PC-3 (cell line): ENCODE measurements at regions of chr7 and their contacts with region 1.

Region 1: GRCh38 chr7:123154231-123154860 is 45.4 kb downstream of the SLC13A1 start:
- DNase-seq: peak; percentile 86
- ATAC-seq: peak; percentile 78
- H3K4me3 ChIP-seq: no peak overlapping the region
- H3K27ac ChIP-seq: no peak overlapping the region
- H3K4me1 ChIP-seq: no peaks in the 10 kb centered on the region
- H3K27me3 ChIP-seq: no peaks in the 10 kb centered on the region
- CTCF ChIP-seq: peak; percentile 81

Region 2: DNA sequence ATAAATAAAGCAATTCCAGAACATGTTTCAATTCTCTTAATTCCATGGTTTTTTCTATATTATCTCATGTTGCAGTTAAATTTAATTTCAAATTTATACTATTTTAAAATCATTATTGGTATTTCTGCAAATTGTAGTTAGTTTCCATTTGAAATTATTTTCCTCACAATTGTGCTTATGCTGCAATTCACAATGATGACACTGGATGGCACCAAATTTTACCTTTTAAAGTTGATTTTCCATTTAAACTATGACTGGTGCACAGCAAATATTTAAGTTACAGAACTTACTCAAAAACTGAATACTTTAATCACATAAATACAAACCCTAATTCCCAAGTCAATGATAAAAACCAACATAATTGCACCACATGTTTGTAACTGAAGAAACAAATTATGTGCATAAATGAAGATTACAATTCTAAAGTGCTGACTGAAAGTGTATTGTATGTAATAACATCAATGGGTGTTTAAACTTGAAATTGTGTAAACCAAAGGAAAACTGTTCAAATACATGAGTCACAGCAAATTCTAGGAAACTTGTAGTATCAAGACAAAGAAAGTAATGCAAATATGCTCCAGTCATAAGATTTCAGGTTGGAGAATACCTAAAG is 935.0 kb before region 1 on chr7:
- CTCF ChIA-PET with region 1: no interaction called
- POLR2A ChIA-PET with region 1: no interaction called
- intact Hi-C with region 1: loop called (anchors 10 kb)
- DNase-seq: peak; percentile 63
- ATAC-seq: peak; percentile 46
- H3K4me3 ChIP-seq: no peak overlapping the region
- H3K27ac ChIP-seq: no peak overlapping the region
- H3K4me1 ChIP-seq: peaks cover 11% of the 10 kb centered on the region; the same call in 1 of the 2 replicates
- H3K27me3 ChIP-seq: no peaks in the 10 kb centered on the region
- CTCF ChIP-seq: peak; percentile 70

Region 3: DNA sequence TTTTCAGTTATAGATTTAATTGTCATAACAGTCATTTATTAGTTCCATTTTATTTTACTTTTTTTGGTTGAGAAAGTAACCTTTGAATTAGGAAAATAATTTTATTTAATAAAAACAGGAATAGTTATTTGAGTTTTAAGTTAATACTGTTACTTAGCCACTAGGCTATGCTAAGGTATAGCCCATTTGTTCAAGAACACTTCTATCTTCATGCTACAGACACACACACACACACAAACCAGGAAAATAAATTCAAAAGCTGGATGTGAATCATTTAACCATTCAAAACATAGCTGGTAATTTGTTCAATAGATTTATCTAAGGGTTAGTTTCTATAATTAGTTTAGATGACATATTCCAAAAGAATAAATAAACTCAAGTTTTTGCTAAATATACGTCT is 603.8 kb before region 1 on chr7:
- CTCF ChIA-PET with region 1: no interaction called
- POLR2A ChIA-PET with region 1: no interaction called
- intact Hi-C with region 1: loop called (anchors 5 kb)
- DNase-seq: peak; percentile 4
- ATAC-seq: no peak
- H3K4me3 ChIP-seq: no peak overlapping the region
- H3K27ac ChIP-seq: no peak overlapping the region
- H3K4me1 ChIP-seq: no peaks in the 10 kb centered on the region
- H3K27me3 ChIP-seq: no peaks in the 10 kb centered on the region
- CTCF ChIP-seq: peak; percentile 32; the same call in 1 of the 2 replicates

Region 4: GRCh38 chr7:122803323-122803722 is 351.0 kb before region 1 on chr7:
- CTCF ChIA-PET with region 1: interaction called, 5 read pairs
- POLR2A ChIA-PET with region 1: no interaction called
- intact Hi-C with region 1: loop called (anchors 1 kb)
- DNase-seq: peak; percentile 52
- ATAC-seq: peak; percentile 71
- H3K4me3 ChIP-seq: no peak overlapping the region
- H3K27ac ChIP-seq: no peak overlapping the region
- H3K4me1 ChIP-seq: no peaks in the 10 kb centered on the region
- H3K27me3 ChIP-seq: no peaks in the 10 kb centered on the region
- CTCF ChIP-seq: peak; percentile 61

Region 5: GRCh38 chr7:122896509-122896908 is 257.8 kb before region 1 on chr7:
- CTCF ChIA-PET with region 1: no interaction called
- POLR2A ChIA-PET with region 1: no interaction called
- intact Hi-C with region 1: loop called (anchors 2 kb)
- DNase-seq: peak; percentile 26
- ATAC-seq: no peak
- H3K4me3 ChIP-seq: no peak overlapping the region
- H3K27ac ChIP-seq: no peak overlapping the region
- H3K4me1 ChIP-seq: peaks cover 9% of the 10 kb centered on the region
- H3K27me3 ChIP-seq: no peaks in the 10 kb centered on the region
- CTCF ChIP-seq: peak; percentile 48

Region 6: GRCh38 chr7:123070702-123071286 is 83.6 kb before region 1 on chr7:
- CTCF ChIA-PET with region 1: no interaction called
- POLR2A ChIA-PET with region 1: no interaction called
- intact Hi-C with region 1: loop called (anchors 2 kb)
- DNase-seq: peak; percentile 49
- ATAC-seq: peak; percentile 43
- H3K4me3 ChIP-seq: no peak overlapping the region
- H3K27ac ChIP-seq: no peak overlapping the region
- H3K4me1 ChIP-seq: no peaks in the 10 kb centered on the region
- H3K27me3 ChIP-seq: peaks cover 14% of the 10 kb centered on the region; the same call in 1 of the 2 replicates
- CTCF ChIP-seq: peak; percentile 72

Region 7: DNA sequence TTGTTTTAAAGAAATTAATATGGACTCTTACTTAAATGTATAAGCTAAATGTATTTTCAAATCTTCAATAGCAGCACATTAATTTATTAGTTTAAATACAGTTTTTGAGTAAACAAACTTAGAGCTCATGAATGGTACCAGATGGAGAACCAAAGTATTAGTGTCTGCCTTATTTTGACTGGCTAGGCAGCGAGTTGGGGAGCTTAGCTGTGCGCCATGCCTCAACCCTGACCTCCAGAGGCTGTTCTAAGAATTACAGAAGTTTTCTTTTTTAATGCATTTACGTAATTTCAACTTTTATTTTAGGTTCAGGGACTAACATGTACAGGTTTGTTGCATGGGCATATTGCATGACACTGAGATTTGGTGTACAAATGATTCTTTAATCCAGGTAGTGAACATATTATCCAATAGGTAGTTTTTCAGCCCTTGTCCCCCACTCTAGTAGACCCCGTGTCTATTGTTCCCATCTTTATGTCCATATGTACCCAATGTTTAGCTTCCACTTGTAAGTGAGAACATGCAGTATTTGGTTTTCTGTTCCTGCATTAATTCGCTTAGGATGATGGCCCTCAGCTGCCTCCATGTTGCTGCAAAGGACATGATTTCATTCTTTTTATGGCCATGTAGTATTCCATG is 213.3 kb after region 1 on chr7:
- CTCF ChIA-PET with region 1: interaction called, 4 read pairs
- POLR2A ChIA-PET with region 1: no interaction called
- intact Hi-C with region 1: loop called (anchors 2 kb)
- DNase-seq: peak; percentile 63
- ATAC-seq: peak; percentile 71
- H3K4me3 ChIP-seq: no peak overlapping the region
- H3K27ac ChIP-seq: no peak overlapping the region
- H3K4me1 ChIP-seq: no peaks in the 10 kb centered on the region
- H3K27me3 ChIP-seq: no peaks in the 10 kb centered on the region
- CTCF ChIP-seq: peak; percentile 71